Mammary epithelial cell (primary cell): ENCODE measurements at regions of chr2 and their contacts with region 1.

Region 1: GRCh38 chr2:205776139-205776538 is 93.8 kb downstream of the NRP2 start:
- DNase-seq: no peak
- H3K4me3 ChIP-seq: no peak overlapping the region
- H3K27ac ChIP-seq: peak overlapping the region; percentile 87
- H3K4me1 ChIP-seq: peaks cover 48% of the 10 kb centered on the region
- H3K27me3 ChIP-seq: no peaks in the 10 kb centered on the region
- CTCF ChIP-seq: peak; percentile 34 to 54

Region 2: GRCh38 chr2:205885492-205886099 is 109.5 kb after region 1 on chr2:
- CTCF ChIA-PET with region 1: interaction called, 6 read pairs
- dilution Hi-C with region 1: no loop called
- in situ Hi-C with region 1: no loop called
- intact Hi-C with region 1: loop called (anchors 1 kb)
- DNase-seq: peak; percentile 65
- H3K4me3 ChIP-seq: no peak overlapping the region
- H3K27ac ChIP-seq: no peak overlapping the region
- H3K4me1 ChIP-seq: peaks cover 17% of the 10 kb centered on the region
- H3K27me3 ChIP-seq: no peaks in the 10 kb centered on the region
- CTCF ChIP-seq: peak; percentile 63 to 72